GM13976 (cell line): ENCODE measurements at regions of chr11 and their contacts with region 1.

Region 1: GRCh38 chr11:78432058-78432515 is 14.5 kb upstream of the GAB2 start:
- DNase-seq: no peak
- CTCF ChIP-seq: peak; percentile 12

Region 2: GRCh38 chr11:78499971-78500370 is 67.9 kb after region 1 on chr11:
- in situ Hi-C with region 1: loop called (anchors 10 kb)
- DNase-seq: no peak
- CTCF ChIP-seq: no peak